ENCODE measurements at regions of chr6 and their contacts with region 1.

Region 1: GRCh38 chr6:109705258-109705657 is 14.2 kb downstream of the FIG4 start:
- DNase-seq: peak; percentile 72 to 87 (median 76)
- ATAC-seq: peak; percentile 99
- H3K4me3 ChIP-seq: no peak overlapping the region
- H3K27ac ChIP-seq: no peak overlapping the region
- H3K4me1 ChIP-seq: no peaks in the 10 kb centered on the region
- H3K27me3 ChIP-seq: no peaks in the 10 kb centered on the region
- CTCF ChIP-seq: peak; percentile 99 to 100 (median 99)
- EP300 ChIP-seq: no peak
- POLR2A ChIP-seq: no peak
- RAD21 ChIP-seq: peak; percentile 100

Region 2: GRCh38 chr6:109783250-109783986 is 78.2 kb after region 1 on chr6:
- CTCF ChIA-PET with region 1: interaction called, 29 read pairs
- POLR2A ChIA-PET with region 1: interaction called, 3 read pairs
- in situ Hi-C with region 1: loop called (anchors 5 kb)
- intact Hi-C with region 1: loop called (anchors 1 kb)
- DNase-seq: peak; percentile 14 to 52 (median 24)
- ATAC-seq: peak; percentile 86
- H3K4me3 ChIP-seq: no peak overlapping the region
- H3K27ac ChIP-seq: no peak overlapping the region
- H3K4me1 ChIP-seq: no peaks in the 10 kb centered on the region
- H3K27me3 ChIP-seq: no peaks in the 10 kb centered on the region; a peak in 1 of 5 replicates
- CTCF ChIP-seq: peak; percentile 65 to 80 (median 67)
- EP300 ChIP-seq: no peak
- POLR2A ChIP-seq: no peak
- RAD21 ChIP-seq: peak; percentile 88 to 91

Region 3: DNA sequence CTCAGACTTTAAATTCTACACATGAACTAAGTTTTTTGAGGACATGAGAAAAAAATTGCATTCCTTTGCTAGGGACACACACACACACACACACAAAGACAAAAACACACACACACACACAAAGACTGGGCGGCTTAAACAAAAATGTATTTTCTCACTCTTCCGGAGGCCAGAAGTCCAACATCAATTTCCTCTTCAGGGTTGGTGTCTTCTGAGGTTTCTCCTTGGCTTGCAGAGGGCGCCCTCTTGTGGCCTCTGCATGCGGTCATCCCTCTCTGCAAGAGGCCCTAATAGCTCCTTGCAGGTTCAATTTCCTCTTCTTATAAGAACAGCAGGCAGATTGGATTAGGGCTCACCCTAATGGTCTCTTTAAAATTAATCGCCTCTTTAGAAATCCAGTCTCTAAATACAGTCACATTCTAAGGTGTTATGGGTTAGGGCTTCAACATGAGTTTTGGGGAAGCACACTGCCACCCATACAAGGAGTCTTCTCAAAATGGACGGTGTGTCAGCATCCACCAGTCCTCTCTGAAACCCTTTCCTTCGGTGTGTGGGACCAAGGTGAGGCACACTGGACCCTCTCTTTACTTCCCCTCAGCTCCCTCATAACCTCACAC is 334.2 kb after region 1 on chr6:
- CTCF ChIA-PET with region 1: interaction called, 71 read pairs
- POLR2A ChIA-PET with region 1: interaction called, 3 read pairs
- in situ Hi-C with region 1: no loop called
- intact Hi-C with region 1: loop called (anchors 1 kb)
- DNase-seq: peak; percentile 66 to 85 (median 68)
- ATAC-seq: peak; percentile 96
- H3K4me3 ChIP-seq: no peak overlapping the region
- H3K27ac ChIP-seq: no peak overlapping the region
- H3K4me1 ChIP-seq: no peaks in the 10 kb centered on the region
- H3K27me3 ChIP-seq: peaks cover 4 to 23% of the 10 kb centered on the region in 2 experiments; a peak in 3 of 5 replicates
- CTCF ChIP-seq: peak; percentile 90 to 94 (median 90)
- EP300 ChIP-seq: no peak
- POLR2A ChIP-seq: no peak
- RAD21 ChIP-seq: peak; percentile 95 to 97

Region 4: DNA sequence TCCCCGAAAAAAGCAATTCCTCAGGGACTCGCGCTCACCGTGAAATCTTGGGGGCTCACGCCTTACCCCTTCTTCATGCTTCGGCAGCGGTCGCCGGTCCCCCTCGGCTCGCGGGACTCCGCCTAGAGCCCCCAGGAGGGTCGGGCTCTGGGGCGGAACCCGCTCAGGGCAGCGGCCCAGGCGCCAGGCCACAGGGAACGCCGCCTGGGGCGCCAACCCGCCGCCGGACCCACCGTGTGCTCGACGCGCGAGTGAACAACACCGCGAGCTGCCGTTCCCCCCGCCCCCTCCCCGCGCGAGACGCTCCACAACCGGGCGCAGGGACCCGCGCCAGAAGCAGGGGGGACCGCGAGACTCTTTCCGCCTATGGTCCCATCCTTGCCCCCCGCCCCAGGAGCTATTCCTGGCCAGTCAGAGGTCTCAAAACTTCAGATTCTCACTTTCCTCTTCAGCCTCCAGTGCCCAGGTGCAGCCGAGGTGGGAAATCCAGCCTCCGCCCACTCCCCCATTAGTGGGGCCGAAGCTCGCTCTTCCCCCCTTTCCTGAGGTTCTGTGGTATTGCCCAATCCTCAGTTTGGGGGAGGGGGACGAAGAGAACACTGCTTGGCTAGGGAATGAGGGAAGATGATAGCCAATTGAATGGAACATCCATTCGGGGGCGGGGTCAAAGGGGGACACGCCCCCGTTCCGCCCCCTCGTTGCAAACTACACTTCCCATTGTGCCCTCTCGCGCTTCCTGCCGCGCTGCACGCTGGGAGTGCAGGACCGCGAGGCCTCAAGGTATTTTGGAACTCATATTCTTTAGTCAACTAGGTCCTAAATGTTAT is 474.4 kb after region 1 on chr6 and contains the start of gene WASF1:
- CTCF ChIA-PET with region 1: no interaction called
- POLR2A ChIA-PET with region 1: no interaction called
- in situ Hi-C with region 1: no loop called
- intact Hi-C with region 1: loop called (anchors 10 kb)
- DNase-seq: peak; percentile 87 to 98 (median 91)
- ATAC-seq: peak; percentile 90
- H3K4me3 ChIP-seq: peak within 1 kb of the TSS; percentile 88
- H3K27ac ChIP-seq: peak within 1 kb of the TSS; percentile 94
- H3K4me1 ChIP-seq: peaks cover 12 to 13% of the 10 kb centered on the region in 2 experiments; a peak in 4 of 5 replicates
- H3K27me3 ChIP-seq: no peaks in the 10 kb centered on the region
- CTCF ChIP-seq: 0 out of 6 replicates have a peak, but pooled peaks of 1 of the 3 experiments have one; percentile 10
- EP300 ChIP-seq: no peak
- POLR2A ChIP-seq: peak; percentile 68
- RAD21 ChIP-seq: no peak
- polyA plus RNA-seq, gene WASF1: 2.1 to 3.4 TPM

Measured in K562 (cell line).